ENCODE measurements at regions of chr9 and their contacts with region 1.

Region 1: DNA sequence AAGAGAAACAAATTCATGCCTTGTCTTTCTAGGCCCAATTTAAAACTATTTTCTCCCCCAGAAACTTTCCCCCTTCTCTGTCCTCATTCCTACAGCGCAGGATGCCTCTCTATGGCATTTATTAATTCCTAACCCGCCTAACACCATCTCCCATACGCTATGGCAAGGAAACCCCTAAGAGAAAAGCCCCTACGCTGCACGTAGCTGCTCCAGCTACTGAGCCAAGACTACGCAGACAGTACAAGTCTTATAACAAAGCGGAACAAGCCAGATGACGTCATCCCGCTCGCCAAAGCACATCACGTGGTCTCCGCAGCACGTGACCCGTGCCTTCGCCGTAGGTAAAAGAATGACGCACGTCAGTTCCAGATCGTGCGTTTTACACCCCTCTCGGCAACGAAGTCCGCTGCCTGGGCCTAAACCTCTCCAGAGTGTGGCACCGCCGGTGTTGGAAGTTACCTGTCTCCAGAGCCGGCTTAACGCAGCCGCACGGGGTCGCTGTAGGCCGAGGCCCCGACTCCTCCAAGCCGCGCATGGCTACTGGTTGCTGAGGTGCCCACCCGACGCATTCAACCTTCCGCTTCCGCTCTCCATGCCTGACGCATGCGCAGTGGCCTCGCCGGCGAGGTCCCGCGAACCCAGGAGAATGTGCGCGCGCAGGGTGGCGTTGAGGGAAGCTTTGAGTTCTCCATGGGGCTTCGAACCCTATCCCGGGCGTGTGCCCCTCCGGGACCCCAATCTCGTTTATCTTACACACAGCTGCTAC is at the start of gene TRMO:
- DNase-seq: peak; percentile 98
- H3K4me3 Mint-ChIP-seq: peak within 1 kb of the TSS; percentile 82
- H3K27ac Mint-ChIP-seq: peak within 1 kb of the TSS; percentile 96
- H3K4me1 Mint-ChIP-seq: peaks cover 52% of the 10 kb centered on the region
- H3K27me3 Mint-ChIP-seq: peaks cover 5% of the 10 kb centered on the region

Region 2: GRCh38 chr9:97740848-97741821 is 181.0 kb before region 1 on chr9:
- CTCF ChIA-PET with region 1: no interaction called
- DNase-seq: peak; percentile 56
- H3K4me3 Mint-ChIP-seq: peak overlapping the region; percentile 29
- H3K27ac Mint-ChIP-seq: no peak overlapping the region
- H3K4me1 Mint-ChIP-seq: peaks cover 12% of the 10 kb centered on the region
- H3K27me3 Mint-ChIP-seq: peaks cover 78% of the 10 kb centered on the region

Region 3: DNA sequence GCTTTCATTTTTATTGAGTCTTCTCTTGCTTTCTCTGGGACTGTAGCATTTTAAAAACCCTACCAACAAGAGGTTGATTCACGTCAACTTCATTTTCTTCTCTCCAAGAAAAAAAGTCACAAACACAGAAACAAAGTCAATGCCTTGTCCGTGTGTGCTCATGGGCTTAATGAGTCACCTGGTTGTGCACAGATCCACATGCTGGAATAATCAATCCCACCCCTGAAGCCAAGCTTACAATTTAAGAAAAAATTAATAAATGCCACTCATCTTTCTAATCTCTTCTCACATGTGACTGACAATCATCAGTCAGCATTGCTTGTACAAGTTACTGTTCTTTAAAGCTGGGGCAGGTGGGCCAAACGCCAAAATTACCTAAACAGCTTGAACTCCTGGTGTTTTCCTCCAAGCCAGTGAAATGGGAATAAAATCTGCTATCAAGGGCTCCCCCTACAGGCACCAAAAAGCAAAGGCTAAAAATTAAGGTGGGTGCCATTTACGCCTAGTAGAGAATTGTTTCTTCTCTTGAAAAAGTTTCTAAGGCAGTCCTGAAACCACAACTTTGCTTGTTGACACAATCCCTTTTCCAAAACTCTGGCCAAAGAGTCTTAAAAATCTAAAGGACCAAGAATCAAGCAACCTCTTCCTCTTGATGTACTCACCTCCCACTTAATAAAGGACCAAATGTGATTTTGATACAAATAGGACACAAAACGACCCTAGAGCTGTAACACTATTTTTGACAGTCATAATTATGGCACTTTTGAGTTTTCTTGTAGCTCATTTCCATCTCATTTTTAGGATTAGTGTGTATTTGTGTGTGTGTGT is 21.2 kb before region 1 on chr9:
- CTCF ChIA-PET with region 1: interaction called, 51 read pairs
- DNase-seq: peak; percentile 36
- H3K4me3 Mint-ChIP-seq: no peak overlapping the region
- H3K27ac Mint-ChIP-seq: peak overlapping the region; percentile 86
- H3K4me1 Mint-ChIP-seq: peaks cover 62% of the 10 kb centered on the region
- H3K27me3 Mint-ChIP-seq: no peaks in the 10 kb centered on the region

Region 4: GRCh38 chr9:97954550-97954989 is 32.4 kb after region 1 on chr9:
- CTCF ChIA-PET with region 1: interaction called, 56 read pairs
- DNase-seq: peak; percentile 74
- H3K4me3 Mint-ChIP-seq: no peak overlapping the region
- H3K27ac Mint-ChIP-seq: no peak overlapping the region
- H3K4me1 Mint-ChIP-seq: peaks cover 9% of the 10 kb centered on the region
- H3K27me3 Mint-ChIP-seq: peaks cover 14% of the 10 kb centered on the region

Region 5: GRCh38 chr9:98007251-98007928 is 85.2 kb after region 1 on chr9:
- CTCF ChIA-PET with region 1: interaction called, 23 read pairs
- DNase-seq: no peak
- H3K4me3 Mint-ChIP-seq: no peak overlapping the region
- H3K27ac Mint-ChIP-seq: peak overlapping the region; percentile 40
- H3K4me1 Mint-ChIP-seq: peaks cover 17% of the 10 kb centered on the region
- H3K27me3 Mint-ChIP-seq: no peaks in the 10 kb centered on the region

Region 6: DNA sequence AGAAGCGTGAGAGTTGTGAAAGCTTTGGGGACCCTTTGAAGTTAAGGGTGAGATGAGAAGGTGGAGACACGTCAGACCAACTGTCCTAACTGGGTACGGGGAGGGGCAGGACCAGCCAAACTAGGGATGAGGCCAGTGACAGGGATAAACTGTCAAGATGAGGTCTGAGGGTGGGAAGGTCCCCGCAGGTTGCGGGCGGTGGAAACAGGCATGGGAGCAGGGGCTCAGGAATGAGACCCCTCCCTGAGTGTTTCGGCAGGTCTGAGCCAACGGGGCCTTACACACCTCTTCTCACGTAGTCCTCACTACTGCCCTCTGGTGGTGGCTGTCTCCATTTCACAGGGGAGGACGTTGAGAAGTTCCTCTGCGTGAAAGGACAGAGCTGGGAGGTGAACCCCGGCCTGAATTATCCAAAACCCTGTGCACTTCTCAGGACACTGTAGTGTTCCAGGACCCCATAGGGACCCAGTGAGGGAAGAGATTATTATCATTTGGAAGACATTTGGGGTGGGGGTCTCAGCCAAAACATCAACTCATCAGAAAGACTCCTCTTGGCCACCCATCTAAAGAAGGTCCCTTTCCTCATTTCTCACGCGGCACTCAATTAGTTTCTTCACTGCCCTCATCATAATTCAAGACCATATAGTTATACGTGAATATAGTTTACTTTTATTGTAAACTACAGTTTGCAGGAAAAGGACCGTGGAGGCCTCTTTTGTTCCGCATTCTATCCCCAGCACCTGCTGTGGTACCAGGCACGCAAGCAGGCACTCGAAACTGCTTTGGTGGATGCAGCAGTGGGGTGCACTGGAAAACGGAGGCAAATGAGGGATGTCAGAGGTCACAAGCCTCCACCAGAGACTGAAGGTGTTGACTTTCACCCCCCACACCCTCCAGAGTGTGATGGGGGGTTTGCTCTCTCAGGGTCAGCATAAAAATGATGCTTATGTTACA is 112.7 kb after region 1 on chr9:
- CTCF ChIA-PET with region 1: interaction called, 49 read pairs
- DNase-seq: peak; percentile 95
- H3K4me3 Mint-ChIP-seq: no peak overlapping the region
- H3K27ac Mint-ChIP-seq: no peak overlapping the region
- H3K4me1 Mint-ChIP-seq: peaks cover 18% of the 10 kb centered on the region
- H3K27me3 Mint-ChIP-seq: peaks cover 27% of the 10 kb centered on the region

Region 7: GRCh38 chr9:98255578-98256296 is 333.6 kb after region 1 on chr9 and contains the start of gene TBC1D2:
- CTCF ChIA-PET with region 1: interaction called, 13 read pairs
- DNase-seq: peak; percentile 98
- H3K4me3 Mint-ChIP-seq: peak within 1 kb of the TSS; percentile 95
- H3K27ac Mint-ChIP-seq: peak within 1 kb of the TSS; percentile 99
- H3K4me1 Mint-ChIP-seq: peaks cover 36% of the 10 kb centered on the region
- H3K27me3 Mint-ChIP-seq: peaks cover 4% of the 10 kb centered on the region

Region 8: GRCh38 chr9:98506422-98507054 is 584.4 kb after region 1 on chr9:
- CTCF ChIA-PET with region 1: no interaction called
- DNase-seq: no peak
- H3K4me3 Mint-ChIP-seq: no peak overlapping the region
- H3K27ac Mint-ChIP-seq: no peak overlapping the region
- H3K4me1 Mint-ChIP-seq: no peaks in the 10 kb centered on the region
- H3K27me3 Mint-ChIP-seq: peaks cover 29% of the 10 kb centered on the region

Measured in activated naive CD4-positive, alpha-beta T cell treated with anti-CD3 and anti-CD28 coated beads, Interleukin-2, amount 10 ng/mL, durations not matched to agents 7 days and 5 days (primary cell).